GM10248 (cell line): ENCODE measurements at regions of chr3 and their contacts with region 1.

Region 1: GRCh38 chr3:181700168-181701087 is 11.3 kb upstream of the SOX2 start:
- DNase-seq: peak; percentile 70
- CTCF ChIP-seq: peak; percentile 77

Region 2: GRCh38 chr3:181210275-181210674 is 490.2 kb before region 1 on chr3:
- CTCF ChIA-PET with region 1: interaction called, 16 read pairs
- POLR2A ChIA-PET with region 1: no interaction called
- DNase-seq: no peak
- CTCF ChIP-seq: no peak

Region 3: GRCh38 chr3:181687190-181687589 is 13.2 kb before region 1 on chr3:
- CTCF ChIA-PET with region 1: interaction called, 39 read pairs
- POLR2A ChIA-PET with region 1: no interaction called
- DNase-seq: no peak
- CTCF ChIP-seq: no peak

Region 4: GRCh38 chr3:181726351-181727330 is 26.2 kb after region 1 on chr3:
- CTCF ChIA-PET with region 1: interaction called, 24 read pairs
- POLR2A ChIA-PET with region 1: no interaction called
- DNase-seq: no peak
- CTCF ChIP-seq: peak; percentile 7